Right ventricle myocardium inferior (tissue), 1 donor: ENCODE measurements at regions of chr17 and their contacts with region 1.

Region 1: GRCh38 chr17:76714822-76715495 is 4.2 kb upstream of the MXRA7 start:
- DNase-seq: peak; percentile 83
- ATAC-seq: peak; percentile 5

Region 2: GRCh38 chr17:76557368-76558197 is 157.4 kb before region 1 on chr17:
- intact Hi-C with region 1: loop called (anchors 5 kb)
- DNase-seq: peak; percentile 97
- ATAC-seq: peak; percentile 88

Region 3: GRCh38 chr17:76671123-76671911 is 43.6 kb before region 1 on chr17:
- intact Hi-C with region 1: loop called (anchors 5 kb)
- DNase-seq: peak; percentile 100
- ATAC-seq: peak; percentile 99

Region 4: DNA sequence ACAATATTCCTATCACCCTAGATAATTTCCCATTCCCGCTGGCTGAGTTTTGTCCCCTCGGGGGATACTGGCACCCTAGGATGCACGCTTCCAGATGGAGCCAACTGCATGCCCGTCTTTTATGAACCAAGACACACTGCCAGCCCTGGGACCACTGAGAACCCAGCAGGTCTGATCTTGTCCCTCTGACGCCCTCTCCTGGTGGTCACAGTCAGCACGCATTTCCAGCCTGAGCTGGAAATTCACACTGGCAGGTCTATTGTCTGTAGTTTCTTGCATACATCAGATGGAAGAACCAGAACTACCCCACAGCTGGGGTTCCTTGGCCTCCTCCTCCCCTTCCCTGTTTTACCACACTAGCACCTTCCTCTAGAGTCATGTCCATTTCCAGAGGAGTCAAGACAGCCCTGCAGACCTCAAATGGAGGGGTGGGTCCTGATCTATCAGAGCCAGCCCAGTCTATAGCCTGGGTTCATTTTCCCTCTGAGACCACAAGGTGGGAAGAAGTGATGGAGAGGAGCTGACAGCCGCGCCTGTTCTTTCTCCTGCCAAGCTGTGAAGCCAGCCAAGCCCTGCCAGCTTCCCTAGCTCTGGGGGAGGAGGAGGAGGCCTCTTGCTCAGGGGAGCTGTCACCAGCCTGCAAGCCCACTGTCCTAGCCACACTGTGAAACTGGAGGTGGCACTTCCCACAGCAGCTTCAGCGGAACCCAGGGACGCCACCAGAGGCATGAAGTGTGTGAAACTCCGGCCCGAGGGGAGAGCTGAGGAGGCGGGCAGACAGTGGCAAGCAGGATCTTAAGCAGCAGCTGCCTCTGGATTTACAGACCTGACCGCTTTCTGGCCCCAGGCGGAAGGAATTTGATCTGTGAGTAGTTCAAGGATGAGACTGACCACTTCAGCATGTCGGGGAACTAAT is 33.5 kb before region 1 on chr17:
- intact Hi-C with region 1: loop called (anchors 2 kb)
- DNase-seq: no peak
- ATAC-seq: peak; percentile 59

Region 5: GRCh38 chr17:76687308-76688164 is 27.4 kb before region 1 on chr17:
- intact Hi-C with region 1: loop called (anchors 2 kb)
- DNase-seq: peak; percentile 87
- ATAC-seq: peak; percentile 71

Region 6: DNA sequence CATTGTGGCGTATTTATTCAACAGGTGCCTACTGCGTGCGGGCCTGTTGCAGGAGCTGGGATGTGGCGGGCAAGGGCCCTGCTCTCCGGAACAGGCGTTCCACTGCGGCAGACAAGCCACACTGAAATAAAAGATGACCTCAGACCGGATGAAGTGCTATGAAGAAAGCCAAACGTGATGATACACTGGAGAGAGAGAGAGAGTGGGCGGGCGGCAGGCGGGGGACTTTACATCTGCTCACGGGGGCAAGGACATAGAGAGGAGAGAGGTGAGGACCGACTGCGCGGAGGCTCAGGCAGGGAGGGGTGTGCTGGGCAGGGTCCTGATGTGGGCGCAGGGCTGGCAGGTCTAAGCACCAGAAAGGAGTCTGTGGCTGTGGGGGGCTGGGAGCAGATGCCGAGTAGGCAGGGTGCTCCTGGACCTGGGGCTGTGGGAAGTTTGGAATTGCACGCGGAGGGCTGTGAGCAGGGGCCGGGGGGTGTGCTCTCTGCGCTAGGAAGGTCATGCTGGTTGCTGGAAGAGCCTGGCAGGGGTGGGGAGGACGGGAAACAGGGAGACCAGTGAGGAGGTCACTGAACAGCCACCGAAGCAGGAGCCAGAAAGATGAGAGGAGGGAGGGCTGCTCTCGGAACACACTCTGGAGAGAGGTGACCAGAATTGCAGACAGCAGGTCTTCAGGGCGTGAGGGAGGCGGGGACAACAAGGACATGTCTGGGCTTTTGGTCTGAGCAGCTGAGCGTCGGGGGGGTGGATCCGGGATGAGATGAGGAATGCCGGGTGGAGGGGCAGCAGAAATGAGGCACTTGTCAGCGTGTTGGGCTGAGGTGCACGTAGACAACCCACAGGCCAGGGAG is 14.1 kb before region 1 on chr17:
- intact Hi-C with region 1: loop called (anchors 1 kb)
- DNase-seq: peak; percentile 84
- ATAC-seq: peak; percentile 76

Region 7: GRCh38 chr17:76791053-76791980 is 76.4 kb after region 1 on chr17:
- intact Hi-C with region 1: no loop called
- DNase-seq: no peak
- ATAC-seq: no peak